Thyroid gland (tissue), 4 donors: ENCODE measurements at regions of chr9 and their contacts with region 1.

Region 1: GRCh38 chr9:16289639-16290038 is 580.8 kb downstream of the BNC2 start:
- DNase-seq: no peak
- H3K4me3 ChIP-seq: no peak overlapping the region
- H3K27ac ChIP-seq: no peak overlapping the region
- H3K4me1 ChIP-seq: peaks cover 3 to 4% of the 10 kb centered on the region in 2 donors
- H3K27me3 ChIP-seq: no peaks in the 10 kb centered on the region
- CTCF ChIP-seq: no peak
- POLR2A ChIP-seq: no peak

Region 2: GRCh38 chr9:16352791-16353411 is 63.3 kb after region 1 on chr9:
- intact Hi-C with region 1: loop called (anchors 10 kb)
- DNase-seq: no peak
- H3K4me3 ChIP-seq: no peak overlapping the region
- H3K27ac ChIP-seq: no peak overlapping the region
- H3K4me1 ChIP-seq: peaks cover 0 to 9% of the 10 kb centered on the region in 2 donors
- H3K27me3 ChIP-seq: no peaks in the 10 kb centered on the region
- CTCF ChIP-seq: no peak
- POLR2A ChIP-seq: no peak

Region 3: DNA sequence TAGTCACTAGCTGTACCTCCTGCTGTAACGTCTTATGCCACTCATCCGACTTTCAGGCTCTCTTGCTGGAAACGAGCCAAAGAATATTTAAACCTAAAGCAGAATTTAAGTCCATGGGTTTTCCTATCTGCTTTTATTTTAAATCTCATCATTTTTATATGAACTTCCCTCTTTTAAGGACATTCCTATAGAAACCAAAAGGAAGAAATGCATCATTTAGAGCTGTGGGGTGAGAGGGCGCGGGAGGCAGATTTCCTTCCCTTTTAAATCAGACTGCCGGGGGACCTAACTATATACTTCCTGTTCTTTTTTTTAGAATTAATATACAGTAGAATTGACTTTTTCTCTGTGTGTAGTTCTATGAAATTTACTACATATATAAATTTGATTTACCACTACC is 112.1 kb after region 1 on chr9:
- intact Hi-C with region 1: no loop called
- DNase-seq: no peak
- H3K4me3 ChIP-seq: no peak overlapping the region
- H3K27ac ChIP-seq: no peak overlapping the region
- H3K4me1 ChIP-seq: no peaks in the 10 kb centered on the region
- H3K27me3 ChIP-seq: no peaks in the 10 kb centered on the region
- CTCF ChIP-seq: no peak
- POLR2A ChIP-seq: no peak